Activated CD4-positive, alpha-beta T cell treated with anti-CD3 and anti-CD28 coated beads, Interleukin-2, amount 10 ng/mL, durations not matched to agents 24 days and 14 days (primary cell): ENCODE measurements at regions of chr9 and their contacts with region 1.

Region 1: GRCh38 chr9:120982836-120983235 is 56.2 kb upstream of the TRAF1 start:
- DNase-seq: no peak
- H3K4me3 Mint-ChIP-seq: no peak overlapping the region
- H3K27ac Mint-ChIP-seq: no peak overlapping the region
- H3K4me1 Mint-ChIP-seq: peaks cover 7% of the 10 kb centered on the region
- H3K27me3 Mint-ChIP-seq: peaks cover 13% of the 10 kb centered on the region

Region 2: GRCh38 chr9:120960001-120960400 is 22.8 kb before region 1 on chr9:
- intact Hi-C with region 1: loop called (anchors 2 kb)
- DNase-seq: no peak
- H3K4me3 Mint-ChIP-seq: no peak overlapping the region
- H3K27ac Mint-ChIP-seq: no peak overlapping the region
- H3K4me1 Mint-ChIP-seq: no peaks in the 10 kb centered on the region
- H3K27me3 Mint-ChIP-seq: peaks cover 16% of the 10 kb centered on the region

Region 3: DNA sequence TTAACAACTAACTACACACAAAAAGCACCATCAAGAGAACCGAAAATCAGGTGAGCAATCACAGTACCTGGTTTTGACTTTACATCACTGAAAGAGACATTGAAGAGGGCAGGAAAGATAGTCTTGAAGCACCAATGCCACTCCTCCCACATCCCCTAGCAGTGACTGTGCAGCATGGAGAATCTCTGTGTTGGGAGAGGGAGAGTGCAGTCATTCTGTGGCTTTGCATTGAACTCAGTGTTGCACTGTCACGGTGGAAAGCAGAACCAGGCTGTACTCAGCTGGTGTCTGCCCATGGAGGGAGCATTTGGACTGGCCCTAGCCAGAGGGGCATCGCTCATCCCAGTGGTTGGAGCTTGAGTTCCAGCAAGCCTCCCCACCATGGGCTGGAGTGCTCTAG is 26.8 kb after region 1 on chr9:
- intact Hi-C with region 1: no loop called
- DNase-seq: no peak
- H3K4me3 Mint-ChIP-seq: no peak overlapping the region
- H3K27ac Mint-ChIP-seq: no peak overlapping the region
- H3K4me1 Mint-ChIP-seq: no peaks in the 10 kb centered on the region
- H3K27me3 Mint-ChIP-seq: peaks cover 9% of the 10 kb centered on the region

Region 4: DNA sequence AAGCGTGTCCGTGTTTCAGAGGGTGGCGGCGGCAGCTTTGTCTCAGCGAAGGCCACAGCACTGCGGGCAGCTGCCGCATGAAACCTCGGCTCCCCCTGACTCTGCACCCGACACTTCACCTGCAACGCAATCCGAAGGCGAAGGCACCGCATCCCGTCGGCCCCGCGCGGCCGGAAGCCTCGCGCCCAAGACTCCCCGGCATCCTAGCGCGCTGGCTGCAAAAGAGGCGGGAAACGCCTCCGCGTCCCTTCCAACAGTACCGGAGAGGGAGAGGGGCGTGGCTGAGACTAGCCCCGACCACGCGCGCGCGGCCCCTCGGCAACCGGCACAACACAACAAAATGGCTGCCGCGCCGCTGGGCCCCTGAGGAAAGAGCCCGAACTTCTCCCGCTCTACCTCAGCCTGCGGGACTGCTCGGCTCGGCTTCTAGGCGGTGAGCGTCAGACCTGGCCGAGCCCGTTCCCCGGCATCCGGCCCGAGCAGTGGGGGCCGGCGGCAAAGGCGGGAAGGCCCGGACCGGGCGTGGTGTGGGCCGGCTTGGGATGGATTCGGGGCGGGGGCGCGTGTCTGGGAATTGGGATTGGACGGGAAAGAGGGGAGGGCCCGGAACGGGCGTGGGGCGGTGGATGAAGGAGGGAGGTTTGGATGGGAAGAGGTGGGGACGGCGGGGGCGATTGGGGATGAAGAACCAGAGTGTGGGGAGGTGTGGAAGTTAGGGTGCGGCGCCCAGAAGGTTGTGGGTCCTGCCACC is 92.0 kb after region 1 on chr9 and contains the start of gene CNTRL:
- intact Hi-C with region 1: loop called (anchors 5 kb)
- DNase-seq: peak; percentile 97
- H3K4me3 Mint-ChIP-seq: peak within 1 kb of the TSS; percentile 100
- H3K27ac Mint-ChIP-seq: peak within 1 kb of the TSS; percentile 98
- H3K4me1 Mint-ChIP-seq: peaks cover 52% of the 10 kb centered on the region
- H3K27me3 Mint-ChIP-seq: no peaks in the 10 kb centered on the region
- total RNA-seq, gene CNTRL: 68.3 and 69.4 TPM in 2 replicates